ENCODE measurements at regions of chr14 and their contacts with region 1.

Region 1: GRCh38 chr14:39956372-39956771 is 524.1 kb upstream of the FBXO33 start:
- DNase-seq: peak; percentile 63
- ATAC-seq: peak; percentile 63
- H3K4me3 ChIP-seq: no peak overlapping the region
- H3K27ac ChIP-seq: no peak overlapping the region
- H3K4me1 ChIP-seq: no peaks in the 10 kb centered on the region
- H3K27me3 ChIP-seq: no peaks in the 10 kb centered on the region
- CTCF ChIP-seq: peak; percentile 71

Region 2: GRCh38 chr14:39491134-39491571 is 465.2 kb before region 1 on chr14:
- CTCF ChIA-PET with region 1: no interaction called
- POLR2A ChIA-PET with region 1: no interaction called
- intact Hi-C with region 1: loop called (anchors 2 kb)
- DNase-seq: peak; percentile 60
- ATAC-seq: peak; percentile 18; the same call in 1 of the 2 replicates
- H3K4me3 ChIP-seq: no peak overlapping the region
- H3K27ac ChIP-seq: no peak overlapping the region
- H3K4me1 ChIP-seq: no peaks in the 10 kb centered on the region
- H3K27me3 ChIP-seq: no peaks in the 10 kb centered on the region
- CTCF ChIP-seq: peak; percentile 73

Region 3: DNA sequence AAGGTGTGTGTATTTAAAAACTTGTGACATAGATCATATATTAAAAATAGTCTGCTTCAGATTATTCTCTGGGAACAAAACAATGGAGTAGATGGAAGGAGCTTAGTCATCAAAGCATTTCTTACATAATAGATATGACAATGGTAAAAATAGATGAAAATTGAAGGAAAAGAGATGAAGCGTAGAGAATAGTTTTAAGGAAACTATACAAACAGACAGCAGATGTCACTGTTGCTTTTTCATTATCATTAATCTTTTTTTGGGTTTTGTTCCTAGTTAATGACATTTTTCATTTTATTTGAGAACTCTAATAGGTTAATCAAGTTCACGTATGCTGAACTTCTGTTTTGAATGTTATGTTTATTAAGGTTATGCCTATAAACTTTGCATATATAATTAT is 374.9 kb before region 1 on chr14:
- CTCF ChIA-PET with region 1: no interaction called
- POLR2A ChIA-PET with region 1: no interaction called
- intact Hi-C with region 1: loop called (anchors 10 kb)
- DNase-seq: peak; percentile 21
- ATAC-seq: no peak
- H3K4me3 ChIP-seq: no peak overlapping the region
- H3K27ac ChIP-seq: no peak overlapping the region
- H3K4me1 ChIP-seq: 0 out of 2 replicates have a peak, but pooled peaks cover 4% of the 10 kb centered on the region
- H3K27me3 ChIP-seq: 0 out of 2 replicates have a peak, but pooled peaks cover 10% of the 10 kb centered on the region
- CTCF ChIP-seq: peak; percentile 63

Region 4: GRCh38 chr14:40252810-40253432 is 296.5 kb after region 1 on chr14:
- CTCF ChIA-PET with region 1: no interaction called
- POLR2A ChIA-PET with region 1: no interaction called
- intact Hi-C with region 1: no loop called
- DNase-seq: peak; percentile 44
- ATAC-seq: peak; percentile 49; the same call in 1 of the 2 replicates
- H3K4me3 ChIP-seq: no peak overlapping the region
- H3K27ac ChIP-seq: no peak overlapping the region
- H3K4me1 ChIP-seq: peaks cover 15% of the 10 kb centered on the region
- H3K27me3 ChIP-seq: no peaks in the 10 kb centered on the region
- CTCF ChIP-seq: peak; percentile 60

Region 5: GRCh38 chr14:41072776-41073175 is 1116.4 kb after region 1 on chr14:
- CTCF ChIA-PET with region 1: no interaction called
- POLR2A ChIA-PET with region 1: interaction called, 13 read pairs
- intact Hi-C with region 1: no loop called
- DNase-seq: no peak
- ATAC-seq: no peak
- H3K4me3 ChIP-seq: no peak overlapping the region
- H3K27ac ChIP-seq: no peak overlapping the region
- H3K4me1 ChIP-seq: no peaks in the 10 kb centered on the region
- H3K27me3 ChIP-seq: no peaks in the 10 kb centered on the region
- CTCF ChIP-seq: no peak